ENCODE measurements at regions of chr7 and their contacts with region 1.

Region 1: GRCh38 chr7:85186521-85187241 is at the start of gene SEMA3D:
- DNase-seq: peak; percentile 93
- H3K4me3 ChIP-seq: peak within 1 kb of the TSS; percentile 48 to 79 (median 54)
- H3K27ac ChIP-seq: peak within 1 kb of the TSS; percentile 57 to 89 (median 82)
- H3K4me1 ChIP-seq: peaks cover 0 to 31% (median 11%) of the 10 kb centered on the region in 6 donors
- H3K27me3 ChIP-seq: peaks cover 0 to 32% (median 11%) of the 10 kb centered on the region in 7 donors
- CTCF ChIP-seq: peak; percentile 21 to 91 (median 84)
- POLR2A ChIP-seq: peak in 1 of 3 donors; percentile 57
- total RNA-seq, gene SEMA3D: 65.3 to 210 (median 120) TPM

Region 2: GRCh38 chr7:85030893-85031292 is 155.8 kb before region 1 on chr7:
- intact Hi-C with region 1: loop called (anchors 10 kb)
- DNase-seq: no peak
- H3K4me3 ChIP-seq: no peak overlapping the region
- H3K27ac ChIP-seq: no peak overlapping the region
- H3K4me1 ChIP-seq: no peaks in the 10 kb centered on the region
- H3K27me3 ChIP-seq: no peaks in the 10 kb centered on the region
- CTCF ChIP-seq: peak in 7 of 11 experiments; percentile 16 to 50 (median 42)
- POLR2A ChIP-seq: no peak

Region 3: DNA sequence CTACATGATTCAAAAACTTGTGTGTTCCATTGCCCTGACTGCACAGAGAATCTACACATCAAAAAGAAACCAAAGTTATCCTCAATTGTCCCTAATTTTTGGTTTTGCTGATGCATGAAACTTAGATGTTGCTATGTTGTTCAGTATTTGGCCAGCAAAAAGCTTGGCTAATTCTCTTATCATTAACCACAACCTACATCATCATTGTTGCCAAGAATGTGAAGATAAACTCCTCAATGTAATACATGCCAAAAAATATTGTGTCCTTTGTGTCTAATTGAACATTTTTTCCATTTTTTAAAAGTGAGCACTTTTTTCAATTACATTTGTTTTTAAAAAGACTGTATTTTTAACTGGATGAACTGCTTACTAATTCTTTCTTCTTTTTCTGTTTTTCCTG is 268.2 kb after region 1 on chr7:
- intact Hi-C with region 1: loop called (anchors 10 kb)
- DNase-seq: no peak
- H3K4me3 ChIP-seq: no peak overlapping the region
- H3K27ac ChIP-seq: no peak overlapping the region
- H3K4me1 ChIP-seq: no peaks in the 10 kb centered on the region
- H3K27me3 ChIP-seq: no peaks in the 10 kb centered on the region
- CTCF ChIP-seq: no peak
- POLR2A ChIP-seq: no peak